ENCODE measurements at regions of chr7 and their contacts with region 1.

Region 1: DNA sequence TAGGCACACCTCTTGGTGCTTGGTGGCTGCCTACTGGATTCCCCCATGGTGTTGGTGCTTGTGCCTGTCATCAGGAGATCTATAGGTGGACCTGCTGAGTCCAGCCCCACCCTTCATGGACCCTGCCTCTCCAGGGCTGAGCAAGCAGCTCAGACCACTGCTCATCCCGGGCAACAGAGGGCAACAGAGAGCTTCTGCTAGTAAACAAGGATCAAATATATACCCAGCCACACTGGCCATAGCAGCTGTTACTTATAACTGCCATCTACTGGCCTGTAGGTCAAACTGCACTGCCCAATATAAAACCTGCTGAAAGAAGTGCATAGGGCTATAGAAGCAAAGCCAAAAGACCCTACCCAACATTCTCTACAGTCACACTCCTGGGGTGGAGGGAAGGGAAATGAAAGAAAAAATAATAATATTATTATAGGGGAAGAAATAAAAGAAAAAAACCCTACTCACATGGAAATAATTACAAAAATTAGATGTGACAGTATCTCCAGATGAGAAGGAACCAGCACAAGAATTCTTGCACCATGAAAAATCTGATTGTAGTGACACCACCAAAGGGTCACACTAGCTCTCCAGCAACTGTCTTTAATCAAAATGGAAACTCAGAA is 54.9 kb upstream of the ZNF800 start:
- DNase-seq: peak; percentile 84
- ATAC-seq: peak; percentile 100
- H3K4me3 ChIP-seq: no peak overlapping the region
- H3K4me3 Mint-ChIP-seq: no peak overlapping the region
- H3K27ac ChIP-seq: no peak overlapping the region
- H3K27ac Mint-ChIP-seq: peak overlapping the region; percentile 71
- H3K4me1 ChIP-seq: peaks cover 0 to 4% of the 10 kb centered on the region in 2 donors
- H3K4me1 Mint-ChIP-seq: peaks cover 3% of the 10 kb centered on the region
- H3K27me3 ChIP-seq: peaks cover 0 to 20% (median 7%) of the 10 kb centered on the region in 4 experiments
- H3K27me3 Mint-ChIP-seq: peaks cover 58% of the 10 kb centered on the region
- CTCF ChIP-seq: peak; percentile 94

Region 2: GRCh38 chr7:126760914-126761577 is 686.4 kb before region 1 on chr7:
- CTCF ChIA-PET with region 1: no interaction called
- POLR2A ChIA-PET with region 1: no interaction called
- intact Hi-C with region 1: no loop called
- DNase-seq: no peak
- ATAC-seq: no peak
- H3K4me3 ChIP-seq: no peak overlapping the region
- H3K4me3 Mint-ChIP-seq: no peak overlapping the region
- H3K27ac ChIP-seq: no peak overlapping the region
- H3K27ac Mint-ChIP-seq: no peak overlapping the region
- H3K4me1 ChIP-seq: no peaks in the 10 kb centered on the region
- H3K4me1 Mint-ChIP-seq: peaks cover 2% of the 10 kb centered on the region
- H3K27me3 ChIP-seq: no peaks in the 10 kb centered on the region
- H3K27me3 Mint-ChIP-seq: no peaks in the 10 kb centered on the region
- CTCF ChIP-seq: no peak

Region 3: GRCh38 chr7:127347567-127348246 is 99.7 kb before region 1 on chr7:
- CTCF ChIA-PET with region 1: interaction called, 93 read pairs
- POLR2A ChIA-PET with region 1: no interaction called
- intact Hi-C with region 1: loop called (anchors 1 kb)
- DNase-seq: peak; percentile 85
- ATAC-seq: peak; percentile 99
- H3K4me3 ChIP-seq: peak overlapping the region in 4 of 5 experiments; percentile 25 to 59 (median 42)
- H3K4me3 Mint-ChIP-seq: peak overlapping the region; percentile 81
- H3K27ac ChIP-seq: no peak overlapping the region
- H3K27ac Mint-ChIP-seq: no peak overlapping the region
- H3K4me1 ChIP-seq: peaks cover 3 to 11% of the 10 kb centered on the region in 2 donors
- H3K4me1 Mint-ChIP-seq: peaks cover 23% of the 10 kb centered on the region
- H3K27me3 ChIP-seq: no peaks in the 10 kb centered on the region
- H3K27me3 Mint-ChIP-seq: no peaks in the 10 kb centered on the region
- CTCF ChIP-seq: peak; percentile 61

Region 4: GRCh38 chr7:127366680-127367079 is 80.8 kb before region 1 on chr7:
- CTCF ChIA-PET with region 1: interaction called, 10 read pairs
- POLR2A ChIA-PET with region 1: no interaction called
- intact Hi-C with region 1: no loop called
- DNase-seq: no peak
- ATAC-seq: no peak
- H3K4me3 ChIP-seq: no peak overlapping the region
- H3K4me3 Mint-ChIP-seq: no peak overlapping the region
- H3K27ac ChIP-seq: no peak overlapping the region
- H3K27ac Mint-ChIP-seq: peak overlapping the region; percentile 42
- H3K4me1 ChIP-seq: no peaks in the 10 kb centered on the region
- H3K4me1 Mint-ChIP-seq: peaks cover 7% of the 10 kb centered on the region
- H3K27me3 ChIP-seq: no peaks in the 10 kb centered on the region
- H3K27me3 Mint-ChIP-seq: no peaks in the 10 kb centered on the region
- CTCF ChIP-seq: no peak

Region 5: DNA sequence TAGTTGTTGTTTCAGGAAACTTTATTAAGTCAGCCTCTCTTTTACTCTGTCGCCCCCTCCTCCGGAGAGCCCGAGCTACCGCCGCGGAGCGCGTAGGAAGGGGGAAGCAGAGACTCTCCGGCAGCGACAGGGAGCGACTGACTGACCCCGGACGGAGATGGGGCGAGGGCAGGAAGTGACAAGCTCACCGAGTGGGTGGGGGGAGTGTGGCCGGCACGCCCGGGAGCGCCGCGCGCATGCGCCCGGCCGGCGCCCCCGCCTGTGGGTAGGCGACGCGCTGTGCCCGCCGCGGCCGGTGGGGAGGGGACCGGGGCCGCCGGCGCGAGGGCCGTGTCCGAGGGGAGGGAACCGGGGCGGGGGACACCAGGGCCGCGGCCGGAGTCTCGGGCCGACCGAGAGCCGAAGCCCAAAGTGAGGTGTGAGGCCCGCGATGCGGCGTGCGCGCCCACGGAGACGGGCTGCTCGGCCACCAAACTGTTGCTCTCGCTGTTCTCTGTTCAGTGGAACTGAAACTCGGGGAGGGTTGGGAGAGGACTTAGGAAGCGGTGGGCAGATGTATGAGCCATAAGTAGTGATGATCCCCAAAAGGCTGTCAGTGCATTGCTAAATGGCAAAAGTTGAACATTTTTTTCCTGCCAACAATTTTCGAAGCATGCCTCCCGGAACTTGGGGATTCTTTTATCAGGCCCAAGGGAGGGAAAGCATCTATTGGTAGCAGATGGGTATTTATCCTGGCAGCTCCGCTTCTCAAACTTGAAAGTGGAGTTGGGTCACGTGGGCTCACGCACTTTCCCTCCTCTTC is 54.7 kb before region 1 on chr7 and contains the start of gene ZNF800:
- CTCF ChIA-PET with region 1: interaction called, 54 read pairs
- POLR2A ChIA-PET with region 1: interaction called, 7 read pairs
- intact Hi-C with region 1: loop called (anchors 1 kb)
- DNase-seq: peak; percentile 94
- ATAC-seq: peak; percentile 84
- H3K4me3 ChIP-seq: peak within 1 kb of the TSS; percentile 89 to 95 (median 92)
- H3K4me3 Mint-ChIP-seq: peak within 1 kb of the TSS; percentile 99
- H3K27ac ChIP-seq: peak within 1 kb of the TSS; percentile 92 to 96
- H3K27ac Mint-ChIP-seq: peak within 1 kb of the TSS; percentile 99
- H3K4me1 ChIP-seq: peaks cover 16 to 33% of the 10 kb centered on the region in 2 donors
- H3K4me1 Mint-ChIP-seq: peaks cover 56% of the 10 kb centered on the region
- H3K27me3 ChIP-seq: no peaks in the 10 kb centered on the region
- H3K27me3 Mint-ChIP-seq: no peaks in the 10 kb centered on the region
- CTCF ChIP-seq: no peak
- total RNA-seq, gene ZNF800: 62.9 and 64.7 TPM in 2 replicates

Region 6: GRCh38 chr7:127486654-127487053 is 39.2 kb after region 1 on chr7:
- CTCF ChIA-PET with region 1: no interaction called
- POLR2A ChIA-PET with region 1: no interaction called
- intact Hi-C with region 1: no loop called
- DNase-seq: no peak
- ATAC-seq: no peak
- H3K4me3 ChIP-seq: no peak overlapping the region
- H3K4me3 Mint-ChIP-seq: no peak overlapping the region
- H3K27ac ChIP-seq: no peak overlapping the region
- H3K27ac Mint-ChIP-seq: no peak overlapping the region
- H3K4me1 ChIP-seq: no peaks in the 10 kb centered on the region
- H3K4me1 Mint-ChIP-seq: no peaks in the 10 kb centered on the region
- H3K27me3 ChIP-seq: peaks cover 0 to 6% (median 0%) of the 10 kb centered on the region in 4 experiments
- H3K27me3 Mint-ChIP-seq: peaks cover 21% of the 10 kb centered on the region
- CTCF ChIP-seq: no peak

Region 7: DNA sequence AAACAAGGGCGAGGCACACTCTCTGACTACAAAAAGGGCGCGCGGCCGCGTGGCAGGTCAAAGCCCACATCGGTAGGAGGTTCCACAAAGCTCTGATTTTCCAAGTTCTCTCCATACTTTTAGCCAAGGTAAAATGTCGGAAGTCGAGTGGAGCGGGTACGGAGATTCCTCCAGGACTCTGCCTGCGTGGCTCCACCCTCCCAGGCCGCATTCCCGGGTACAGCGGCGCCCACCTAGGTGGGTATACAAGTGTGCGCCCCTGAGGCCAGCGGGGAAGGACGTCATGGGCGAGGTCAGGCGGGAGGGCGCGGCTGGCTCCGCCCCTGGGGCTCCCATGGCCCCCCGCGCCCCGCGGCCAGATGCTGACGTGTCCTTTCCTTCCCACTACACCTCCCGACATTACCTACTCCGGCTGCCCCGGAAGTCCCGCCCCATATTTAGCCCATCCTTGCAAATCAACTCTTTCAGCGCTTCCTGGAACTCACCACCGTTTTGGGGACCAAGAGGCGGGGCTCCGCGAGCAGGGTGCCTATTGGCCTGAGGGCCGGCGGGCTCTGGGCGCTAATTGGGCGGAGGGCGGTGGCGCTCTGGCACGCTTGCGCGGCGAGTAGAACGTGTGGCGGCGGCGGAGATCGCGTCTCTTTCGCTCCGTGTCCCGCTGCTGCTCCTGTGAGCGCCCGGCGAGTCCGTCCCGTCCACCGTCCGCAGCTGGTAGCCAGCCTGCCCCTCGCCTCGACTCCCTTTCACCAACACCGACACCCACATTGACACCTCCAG is 204.3 kb after region 1 on chr7 and contains the start of gene SND1:
- CTCF ChIA-PET with region 1: no interaction called
- POLR2A ChIA-PET with region 1: no interaction called
- intact Hi-C with region 1: loop called (anchors 1 kb)
- DNase-seq: peak; percentile 99
- ATAC-seq: peak; percentile 90
- H3K4me3 ChIP-seq: peak within 1 kb of the TSS; percentile 73 to 90 (median 86)
- H3K4me3 Mint-ChIP-seq: no peak within 1 kb of the TSS
- H3K27ac ChIP-seq: peak within 1 kb of the TSS; percentile 93 to 96
- H3K27ac Mint-ChIP-seq: peak within 1 kb of the TSS; percentile 97
- H3K4me1 ChIP-seq: peaks cover 38 to 41% of the 10 kb centered on the region in 2 donors
- H3K4me1 Mint-ChIP-seq: peaks cover 47% of the 10 kb centered on the region
- H3K27me3 ChIP-seq: no peaks in the 10 kb centered on the region
- H3K27me3 Mint-ChIP-seq: no peaks in the 10 kb centered on the region
- CTCF ChIP-seq: no peak
- total RNA-seq, gene SND1: 161 and 165 TPM in 2 replicates